ENCODE measurements at regions of chr12 and their contacts with region 1.

Region 1: DNA sequence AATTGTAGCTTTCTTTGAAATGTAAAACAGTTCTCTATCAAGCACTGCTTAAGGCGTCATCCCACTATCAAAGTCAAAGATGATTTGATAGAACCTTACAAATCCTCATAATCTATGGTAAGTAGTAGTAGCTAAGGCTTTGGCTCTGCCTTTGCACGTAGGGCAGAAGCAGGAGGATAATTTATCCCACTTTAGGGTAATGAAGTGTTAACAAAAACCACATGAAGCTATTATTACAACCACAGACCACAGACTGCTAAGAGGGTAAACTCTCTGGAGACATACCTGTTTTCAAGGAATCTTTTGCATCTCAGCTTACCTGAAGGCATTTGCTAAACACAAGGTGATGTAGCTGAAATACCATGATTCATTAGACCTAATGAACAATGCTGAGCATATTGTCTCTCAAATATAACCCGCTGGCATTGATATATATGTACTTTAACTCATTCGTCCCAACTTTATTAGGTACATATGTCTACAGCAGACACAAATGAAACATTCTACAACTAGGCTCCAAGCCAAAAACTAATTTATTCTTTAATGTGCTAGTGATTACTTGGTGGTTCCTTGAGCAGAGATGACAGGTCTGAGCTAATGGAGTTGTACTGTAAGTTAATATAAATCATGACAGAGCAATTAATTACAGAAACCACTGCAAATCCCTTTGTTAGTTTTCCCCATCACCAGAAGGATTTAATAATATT is 368.8 kb downstream of the ETNK1 start:
- DNase-seq: no peak
- H3K4me3 ChIP-seq: no peak overlapping the region
- H3K27ac ChIP-seq: no peak overlapping the region
- H3K4me1 ChIP-seq: peaks cover 2 to 8% (median 3%) of the 10 kb centered on the region in 4 experiments; a peak in 4 of 7 replicates
- H3K27me3 ChIP-seq: no peaks in the 10 kb centered on the region
- CTCF ChIP-seq: no peak
- EP300 ChIP-seq: no peak
- POLR2A ChIP-seq: no peak
- RAD21 ChIP-seq: no peak

Region 2: GRCh38 chr12:22981711-22982110 is 12.1 kb before region 1 on chr12:
- CTCF ChIA-PET with region 1: interaction called, 11 read pairs
- POLR2A ChIA-PET with region 1: no interaction called
- DNase-seq: no peak
- H3K4me3 ChIP-seq: no peak overlapping the region
- H3K27ac ChIP-seq: no peak overlapping the region
- H3K4me1 ChIP-seq: no peaks in the 10 kb centered on the region; a peak in 1 of 7 replicates
- H3K27me3 ChIP-seq: no peaks in the 10 kb centered on the region
- CTCF ChIP-seq: peak in 2 of 3 experiments; percentile 25 to 35; a peak in 2 of 4 replicates
- EP300 ChIP-seq: no peak
- POLR2A ChIP-seq: no peak
- RAD21 ChIP-seq: peak; percentile 53 to 65

Region 3: DNA sequence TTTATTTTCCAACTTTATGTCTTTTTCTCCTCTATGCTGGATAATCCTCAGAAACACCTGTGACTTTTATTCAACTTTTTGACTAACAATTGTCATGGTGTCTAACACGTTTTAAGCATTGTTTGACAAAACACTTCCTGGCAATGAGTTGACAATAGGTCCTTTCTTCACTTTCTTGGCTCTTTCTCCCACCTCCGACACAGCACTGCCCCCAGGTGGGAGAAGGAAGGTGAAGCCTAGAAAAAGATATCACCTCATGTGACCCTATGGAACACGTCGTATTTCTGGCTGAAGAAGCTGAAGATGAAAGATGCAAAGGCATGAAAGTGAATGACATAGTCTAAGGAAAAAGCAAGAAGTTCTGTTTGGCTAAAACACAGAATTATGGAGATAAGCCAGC is 61.2 kb after region 1 on chr12:
- CTCF ChIA-PET with region 1: interaction called, 10 read pairs
- POLR2A ChIA-PET with region 1: no interaction called
- DNase-seq: peak; percentile 38 to 71
- H3K4me3 ChIP-seq: no peak overlapping the region
- H3K27ac ChIP-seq: no peak overlapping the region
- H3K4me1 ChIP-seq: no peaks in the 10 kb centered on the region
- H3K27me3 ChIP-seq: peaks cover 0 to 1% (median 0%) of the 10 kb centered on the region in 4 experiments; a peak in 1 of 7 replicates
- CTCF ChIP-seq: peak; percentile 54 to 88 (median 78)
- EP300 ChIP-seq: no peak
- POLR2A ChIP-seq: no peak
- RAD21 ChIP-seq: peak; percentile 97

Measured in H1 (cell line).